ENCODE measurements at regions of chr7 and their contacts with region 1.

Region 1: DNA sequence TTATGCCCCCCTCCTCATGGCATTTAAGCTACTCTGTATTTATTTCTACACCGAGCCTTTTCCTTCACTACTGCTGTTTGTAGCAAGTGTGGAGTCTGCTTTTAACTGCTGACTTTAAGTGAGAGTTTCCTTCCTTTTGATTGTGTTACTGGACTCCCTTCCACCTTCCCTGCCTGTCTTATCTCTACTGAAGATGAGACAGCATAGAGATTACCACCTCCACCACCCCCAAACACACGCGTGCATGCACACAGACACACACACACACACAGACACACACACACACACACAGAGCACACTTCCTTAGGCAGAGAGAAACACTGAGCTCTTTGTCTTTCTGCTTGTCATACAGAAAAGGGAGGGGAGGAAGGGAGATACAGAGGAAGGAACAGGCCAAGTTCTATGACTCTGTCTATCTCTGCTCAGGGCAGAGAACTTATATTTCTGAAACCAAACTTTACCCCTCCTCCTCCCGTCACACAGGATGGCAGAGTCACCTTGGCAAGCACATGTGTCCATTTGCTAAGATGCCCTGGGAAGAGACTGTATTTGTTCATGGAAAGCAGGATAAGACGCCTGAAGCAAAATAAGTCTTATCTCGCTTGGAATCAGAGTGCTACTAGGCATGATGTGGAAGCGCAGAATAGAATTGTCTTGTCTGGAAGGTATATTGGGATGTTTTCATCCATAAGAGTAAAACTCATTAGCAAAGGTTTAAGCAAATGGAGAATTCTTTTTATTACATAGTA is 81.8 kb upstream of the CAV2 start:
- DNase-seq: peak; percentile 45
- H3K4me3 ChIP-seq: no peak overlapping the region
- H3K27ac ChIP-seq: peak overlapping the region; percentile 67
- H3K4me1 ChIP-seq: peaks cover 25% of the 10 kb centered on the region
- H3K27me3 ChIP-seq: no peaks in the 10 kb centered on the region
- CTCF ChIP-seq: no peak

Region 2: GRCh38 chr7:116571037-116571436 is 153.3 kb after region 1 on chr7:
- CTCF ChIA-PET with region 1: no interaction called
- POLR2A ChIA-PET with region 1: interaction called, 10 read pairs
- intact Hi-C with region 1: no loop called
- DNase-seq: peak; percentile 60
- H3K4me3 ChIP-seq: no peak overlapping the region
- H3K27ac ChIP-seq: peak overlapping the region; percentile 10
- H3K4me1 ChIP-seq: peaks cover 72% of the 10 kb centered on the region
- H3K27me3 ChIP-seq: no peaks in the 10 kb centered on the region
- CTCF ChIP-seq: no peak

Region 3: DNA sequence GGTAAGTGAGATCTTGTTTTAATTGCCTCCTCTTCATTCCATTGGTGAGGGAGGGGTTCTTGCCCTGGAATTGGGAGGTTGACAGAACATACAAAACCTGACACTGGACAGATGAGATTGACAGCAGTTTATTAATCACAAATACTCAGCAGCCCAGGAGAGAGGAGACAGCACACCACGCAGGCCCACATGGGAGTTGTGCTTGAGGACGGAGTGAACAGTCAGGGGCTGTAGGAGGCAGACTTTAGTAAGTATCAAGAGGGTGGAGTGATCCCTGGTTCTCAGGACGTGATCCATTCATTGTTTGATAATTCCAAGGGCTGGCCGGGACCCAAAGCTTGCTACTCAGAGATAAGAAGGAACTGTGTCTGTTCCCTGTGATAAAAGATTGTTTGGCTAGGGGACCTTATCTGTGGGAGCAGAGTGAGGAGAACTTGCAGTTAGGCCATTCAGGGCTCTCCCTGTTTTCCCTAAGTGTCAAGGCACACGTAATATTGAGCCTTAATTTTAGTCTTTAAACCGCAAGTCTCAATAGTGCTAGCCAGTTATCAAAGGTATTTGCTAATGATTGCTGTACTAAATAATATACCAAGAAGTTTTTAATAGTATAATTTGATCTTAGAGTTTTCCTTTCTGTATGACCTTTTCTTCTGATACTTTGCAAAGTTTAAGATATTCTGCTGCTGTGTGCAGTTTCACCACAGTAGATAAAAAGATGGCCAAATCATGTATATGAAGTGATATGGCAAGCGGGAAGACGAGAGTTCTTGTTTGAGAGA is 459.1 kb after region 1 on chr7:
- CTCF ChIA-PET with region 1: no interaction called
- POLR2A ChIA-PET with region 1: no interaction called
- intact Hi-C with region 1: no loop called
- DNase-seq: no peak
- H3K4me3 ChIP-seq: no peak overlapping the region
- H3K27ac ChIP-seq: no peak overlapping the region
- H3K4me1 ChIP-seq: peaks cover 1% of the 10 kb centered on the region
- H3K27me3 ChIP-seq: no peaks in the 10 kb centered on the region
- CTCF ChIP-seq: no peak